Aorta (tissue), 5 donors: ENCODE measurements at regions of chr16 and their contacts with region 1.

Region 1: GRCh38 chr16:30740364-30741251 is 7.6 kb upstream of the PHKG2 start:
- DNase-seq: peak; percentile 91 to 92
- ATAC-seq: peak; percentile 84
- H3K4me3 ChIP-seq: no peak overlapping the region
- H3K27ac ChIP-seq: peak overlapping the region; percentile 3 to 31
- H3K4me1 ChIP-seq: peaks cover 0 to 2% of the 10 kb centered on the region in 2 donors
- H3K27me3 ChIP-seq: no peaks in the 10 kb centered on the region

Region 2: GRCh38 chr16:30698139-30698815 is 42.3 kb before region 1 on chr16:
- intact Hi-C with region 1: loop called (anchors 5 kb)
- DNase-seq: peak; percentile 99 to 100
- ATAC-seq: peak; percentile 95
- H3K4me3 ChIP-seq: peak overlapping the region; percentile 80 to 87
- H3K27ac ChIP-seq: peak overlapping the region; percentile 85 to 90
- H3K4me1 ChIP-seq: peaks cover 0 to 2% of the 10 kb centered on the region in 2 donors
- H3K27me3 ChIP-seq: no peaks in the 10 kb centered on the region

Region 3: GRCh38 chr16:30821891-30822290 is 81.3 kb after region 1 on chr16:
- intact Hi-C with region 1: no loop called
- DNase-seq: no peak
- ATAC-seq: no peak
- H3K4me3 ChIP-seq: no peak overlapping the region
- H3K27ac ChIP-seq: no peak overlapping the region
- H3K4me1 ChIP-seq: no peaks in the 10 kb centered on the region
- H3K27me3 ChIP-seq: no peaks in the 10 kb centered on the region

Region 4: GRCh38 chr16:30838876-30839471 is 98.4 kb after region 1 on chr16:
- intact Hi-C with region 1: no loop called
- DNase-seq: no peak
- ATAC-seq: no peak
- H3K4me3 ChIP-seq: no peak overlapping the region
- H3K27ac ChIP-seq: no peak overlapping the region
- H3K4me1 ChIP-seq: no peaks in the 10 kb centered on the region
- H3K27me3 ChIP-seq: no peaks in the 10 kb centered on the region

Region 5: DNA sequence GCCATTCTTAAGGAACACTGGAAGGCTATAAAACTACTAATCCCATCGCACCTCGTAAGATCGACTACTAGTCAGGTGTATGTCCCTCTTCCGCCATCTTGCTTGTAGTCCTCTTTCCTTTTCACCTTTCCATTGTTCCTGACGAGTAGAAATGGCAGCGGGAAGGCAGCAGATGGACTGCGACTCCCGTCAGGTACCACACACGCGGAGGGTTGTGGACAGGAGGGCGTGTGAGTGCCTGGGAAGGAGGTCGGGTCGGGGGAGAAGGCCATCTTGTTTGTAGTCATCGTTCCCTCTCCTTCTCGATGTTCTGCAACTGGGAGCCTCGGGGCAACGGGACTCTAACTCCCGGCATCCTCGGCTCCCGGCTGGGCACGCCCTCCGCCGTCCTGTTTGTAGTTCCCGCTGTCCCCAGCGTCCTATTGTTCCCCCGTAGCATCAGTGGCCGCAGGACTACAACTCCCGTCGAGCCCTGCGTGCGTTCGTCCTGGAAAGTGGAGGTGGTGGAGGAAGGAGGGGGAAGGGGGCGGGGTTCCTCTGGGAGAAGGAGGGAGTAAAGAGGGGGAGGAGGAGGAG is 182.4 kb after region 1 on chr16:
- intact Hi-C with region 1: no loop called
- DNase-seq: peak; percentile 100
- ATAC-seq: peak; percentile 93
- H3K4me3 ChIP-seq: peak overlapping the region; percentile 49 to 90
- H3K27ac ChIP-seq: peak overlapping the region in 1 of 2 donors; percentile 93
- H3K4me1 ChIP-seq: peaks cover 0 to 1% of the 10 kb centered on the region in 2 donors
- H3K27me3 ChIP-seq: no peaks in the 10 kb centered on the region

Region 6: DNA sequence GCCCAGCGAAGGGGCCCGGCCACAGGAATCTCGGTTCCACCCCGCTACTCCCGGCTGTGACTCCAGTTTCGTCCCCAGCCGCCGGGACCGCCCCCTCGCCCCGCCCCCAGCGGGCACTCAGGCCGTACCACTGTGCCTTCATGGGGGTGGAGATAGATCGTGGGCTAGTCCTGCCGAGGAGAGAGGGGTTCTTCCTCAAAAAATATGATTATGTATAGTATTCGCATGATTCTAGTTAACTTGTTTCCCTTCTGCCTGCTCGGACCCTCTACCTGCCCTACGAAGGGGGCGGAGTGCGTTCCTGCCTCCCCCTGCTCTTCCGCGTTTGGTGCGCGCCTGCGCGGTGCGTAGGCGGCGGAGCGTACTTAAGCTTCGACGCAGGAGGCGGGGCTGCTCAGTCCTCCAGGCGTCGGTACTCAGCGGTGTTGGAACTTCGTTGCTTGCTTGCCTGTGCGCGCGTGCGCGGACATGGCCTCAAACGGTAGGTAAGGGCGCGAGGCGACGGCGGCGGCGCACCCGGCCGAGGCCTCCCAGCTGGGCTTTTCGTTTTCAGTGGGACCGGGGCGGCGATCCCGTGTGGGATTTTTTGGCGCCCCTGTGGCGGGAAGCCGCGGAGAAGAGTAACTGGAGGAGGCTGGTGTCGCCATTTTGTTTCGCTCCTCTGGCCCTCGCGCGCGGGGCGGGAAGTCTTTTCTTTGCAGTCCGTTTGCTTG is 439.3 kb after region 1 on chr16 and contains the start of gene FUS:
- intact Hi-C with region 1: no loop called
- DNase-seq: peak; percentile 94 to 97
- ATAC-seq: peak; percentile 98
- H3K4me3 ChIP-seq: peak within 1 kb of the TSS; percentile 45 to 85
- H3K27ac ChIP-seq: peak within 1 kb of the TSS in 1 of 2 donors; percentile 76
- H3K4me1 ChIP-seq: peaks cover 0 to 5% of the 10 kb centered on the region in 2 donors
- H3K27me3 ChIP-seq: peaks cover 0 to 2% of the 10 kb centered on the region in 2 donors
- total RNA-seq, gene FUS: 243 to 254 TPM